ENCODE measurements at regions of chr21 and their contacts with region 1.

Region 1: DNA sequence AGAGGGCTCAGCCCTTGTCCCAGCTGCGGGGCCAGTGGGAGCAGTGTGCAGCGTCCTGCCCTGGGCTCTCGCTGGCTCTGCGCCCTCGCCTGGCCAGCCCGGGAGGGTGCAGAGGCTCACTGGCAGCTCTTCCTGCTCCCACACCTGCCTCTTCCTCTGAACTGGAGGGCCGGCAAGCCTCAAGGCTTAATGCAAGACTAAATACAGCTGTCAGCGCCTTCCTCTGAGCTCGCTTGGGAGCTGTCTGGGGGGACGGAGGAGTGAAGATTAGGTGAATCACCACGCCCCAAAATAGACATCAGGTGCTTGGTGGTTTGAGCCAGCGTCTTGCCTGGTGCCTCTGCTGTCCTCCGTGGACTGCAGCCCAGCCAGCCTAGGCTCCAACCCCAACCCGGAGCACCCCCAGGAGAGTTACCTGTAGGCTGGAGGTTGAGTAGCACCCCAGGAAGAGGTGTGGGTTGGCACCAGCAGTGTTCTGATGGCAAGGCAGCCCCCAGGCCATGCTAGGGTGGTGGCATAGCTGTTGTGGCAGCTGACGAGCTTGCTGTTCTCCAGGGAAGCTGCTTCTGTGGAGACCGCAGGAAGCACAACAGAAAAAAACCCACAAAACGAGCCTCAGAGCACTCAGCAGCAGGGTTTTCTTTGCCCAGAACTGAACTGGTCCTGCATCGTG is 36.9 kb downstream of the UMODL1 start:
- DNase-seq: peak; percentile 63
- ATAC-seq: peak; percentile 90
- H3K4me3 Mint-ChIP-seq: no peak overlapping the region
- H3K27ac Mint-ChIP-seq: no peak overlapping the region
- H3K4me1 Mint-ChIP-seq: peaks cover 10% of the 10 kb centered on the region
- H3K27me3 Mint-ChIP-seq: no peaks in the 10 kb centered on the region
- CTCF ChIP-seq: no peak

Region 2: GRCh38 chr21:41973861-41974751 is 133.9 kb before region 1 on chr21:
- CTCF ChIA-PET with region 1: interaction called, 10 read pairs
- POLR2A ChIA-PET with region 1: no interaction called
- DNase-seq: no peak
- ATAC-seq: peak; percentile 83
- H3K4me3 Mint-ChIP-seq: no peak overlapping the region
- H3K27ac Mint-ChIP-seq: no peak overlapping the region; the same call in 1 of the 2 replicates
- H3K4me1 Mint-ChIP-seq: peaks cover 22% of the 10 kb centered on the region
- H3K27me3 Mint-ChIP-seq: no peaks in the 10 kb centered on the region; the same call in 1 of the 2 replicates
- CTCF ChIP-seq: no peak

Region 3: DNA sequence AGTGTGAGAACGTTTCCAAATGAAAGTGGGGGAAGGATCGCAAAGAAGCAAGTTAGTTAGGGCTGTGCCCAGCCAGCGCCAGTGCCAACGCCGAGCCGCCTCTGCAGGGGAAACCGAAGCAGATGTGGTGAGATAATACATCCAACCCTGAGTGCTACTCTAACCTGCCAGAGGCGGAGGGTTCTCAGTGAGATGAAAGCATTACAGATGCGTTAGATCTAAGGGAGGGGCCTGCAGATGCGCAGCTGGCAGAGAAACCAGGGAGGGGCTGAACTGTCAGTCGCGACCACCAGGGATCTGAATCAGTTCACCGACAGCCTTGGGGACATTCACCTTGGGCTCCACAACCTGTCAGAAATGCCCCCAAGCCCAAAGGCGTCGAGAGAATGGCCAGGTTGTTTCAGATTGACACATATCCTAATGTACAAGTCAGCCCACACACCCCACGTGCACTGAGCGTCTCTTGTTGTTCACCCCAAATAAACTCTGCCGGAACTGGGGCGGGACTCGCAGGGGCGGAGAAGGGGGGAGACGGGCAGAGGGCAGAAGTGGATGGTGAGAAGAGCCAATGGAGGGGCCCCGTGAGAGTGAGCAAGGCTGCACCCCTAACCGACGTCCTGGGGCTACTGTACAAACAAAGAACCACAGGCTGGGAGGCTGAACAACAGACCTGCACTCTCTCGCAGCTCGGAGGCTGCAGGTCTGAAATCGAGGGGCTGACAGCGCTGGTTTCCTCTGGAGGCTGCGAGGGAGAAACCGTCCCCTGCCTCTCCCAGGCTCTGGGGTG is 45.6 kb before region 1 on chr21:
- CTCF ChIA-PET with region 1: no interaction called
- POLR2A ChIA-PET with region 1: no interaction called
- DNase-seq: no peak
- ATAC-seq: peak; percentile 45; the same call in 1 of the 2 replicates
- H3K4me3 Mint-ChIP-seq: no peak overlapping the region
- H3K27ac Mint-ChIP-seq: no peak overlapping the region
- H3K4me1 Mint-ChIP-seq: peaks cover 34% of the 10 kb centered on the region
- H3K27me3 Mint-ChIP-seq: no peaks in the 10 kb centered on the region
- CTCF ChIP-seq: no peak

Region 4: DNA sequence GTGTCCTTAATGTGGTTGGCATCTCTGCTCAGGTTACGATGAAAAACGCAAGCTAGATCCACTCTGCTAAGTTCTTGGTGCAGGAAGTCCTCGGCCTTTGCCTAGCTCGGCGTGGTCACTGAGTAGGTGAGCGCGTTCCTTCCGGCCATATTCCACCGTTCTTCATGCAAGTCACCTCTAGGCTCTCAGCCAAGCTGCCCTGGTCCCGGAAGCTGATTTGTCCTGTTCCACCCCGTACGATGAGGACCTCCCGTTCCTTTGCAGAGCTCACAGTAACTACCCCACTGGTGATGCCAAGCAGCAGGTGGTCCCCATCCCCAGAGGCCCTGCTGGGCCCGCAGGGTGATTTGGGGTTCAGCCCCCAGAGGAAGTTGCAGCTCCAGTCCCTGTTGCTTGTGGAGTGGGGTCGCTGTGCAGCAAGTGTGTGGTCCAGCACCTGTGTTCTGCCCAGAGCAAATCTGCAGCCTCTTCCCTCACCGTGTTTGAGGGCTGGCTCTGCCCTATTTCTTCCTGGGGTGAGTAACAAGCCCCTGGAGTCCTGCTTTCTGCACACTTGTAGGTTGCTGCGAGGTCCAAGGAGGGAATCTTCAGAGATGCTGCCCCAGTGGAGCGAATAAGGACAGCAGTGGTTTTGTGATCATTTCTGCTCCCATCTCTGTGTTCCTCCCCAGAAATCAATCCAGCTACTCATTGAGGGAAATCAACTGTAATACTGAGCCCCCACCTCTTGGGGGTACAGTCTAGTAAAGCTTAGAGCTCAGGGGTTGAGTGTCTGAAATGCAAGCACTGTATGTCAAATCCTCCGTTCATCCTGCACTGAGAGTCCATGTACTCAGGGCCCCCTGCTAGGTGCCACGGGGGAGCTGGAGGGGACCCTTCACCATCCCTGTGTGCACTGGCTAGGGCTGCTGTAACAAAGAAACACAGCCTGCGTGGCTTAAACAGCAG is 34.6 kb before region 1 on chr21:
- CTCF ChIA-PET with region 1: interaction called, 12 read pairs
- POLR2A ChIA-PET with region 1: no interaction called
- DNase-seq: no peak
- ATAC-seq: no peak
- H3K4me3 Mint-ChIP-seq: no peak overlapping the region
- H3K27ac Mint-ChIP-seq: no peak overlapping the region
- H3K4me1 Mint-ChIP-seq: no peaks in the 10 kb centered on the region
- H3K27me3 Mint-ChIP-seq: no peaks in the 10 kb centered on the region
- CTCF ChIP-seq: no peak

Region 5: GRCh38 chr21:42091899-42092508 is 16.0 kb before region 1 on chr21:
- CTCF ChIA-PET with region 1: interaction called, 12 read pairs
- POLR2A ChIA-PET with region 1: no interaction called
- DNase-seq: peak; percentile 39
- ATAC-seq: peak; percentile 81
- H3K4me3 Mint-ChIP-seq: peak overlapping the region; percentile 24
- H3K27ac Mint-ChIP-seq: no peak overlapping the region
- H3K4me1 Mint-ChIP-seq: peaks cover 12% of the 10 kb centered on the region
- H3K27me3 Mint-ChIP-seq: peaks cover 8% of the 10 kb centered on the region
- CTCF ChIP-seq: no peak